HEK293T (cell line): ENCODE measurements at regions of chr13 and their contacts with region 1.

Region 1: DNA sequence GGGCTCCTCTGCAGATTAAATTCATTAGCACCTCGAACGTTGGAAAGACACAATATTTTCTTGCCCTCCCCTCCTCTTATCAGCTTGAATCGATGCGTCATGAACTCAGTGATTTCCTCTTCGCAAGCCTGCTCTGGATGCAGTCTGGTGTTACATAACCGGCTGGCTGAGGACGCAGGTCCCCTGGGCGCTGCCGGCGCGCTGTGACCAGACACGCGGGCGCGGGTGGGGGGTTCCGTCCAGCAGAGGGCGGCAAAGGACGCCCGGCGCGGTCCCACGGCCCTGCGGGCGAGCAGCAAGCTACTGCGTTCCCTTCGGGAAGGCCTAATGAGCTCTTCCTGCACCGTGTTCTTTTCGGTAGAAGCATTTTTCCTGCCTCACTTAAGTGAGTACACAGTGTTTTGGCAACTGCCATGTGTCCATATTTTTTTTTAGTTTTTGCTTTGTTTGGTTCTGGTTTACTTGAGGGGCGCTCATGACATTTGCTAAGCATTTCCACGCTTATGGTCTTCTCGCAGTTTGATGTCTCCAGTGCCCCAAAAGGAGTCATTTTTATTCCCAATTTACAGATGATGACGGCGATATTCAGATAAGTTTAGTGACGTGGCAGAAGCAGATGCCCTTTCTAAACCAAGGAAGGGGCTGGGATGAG is 112.2 kb upstream of the MBNL2 start:
- DNase-seq: peak; percentile 87

Region 2: DNA sequence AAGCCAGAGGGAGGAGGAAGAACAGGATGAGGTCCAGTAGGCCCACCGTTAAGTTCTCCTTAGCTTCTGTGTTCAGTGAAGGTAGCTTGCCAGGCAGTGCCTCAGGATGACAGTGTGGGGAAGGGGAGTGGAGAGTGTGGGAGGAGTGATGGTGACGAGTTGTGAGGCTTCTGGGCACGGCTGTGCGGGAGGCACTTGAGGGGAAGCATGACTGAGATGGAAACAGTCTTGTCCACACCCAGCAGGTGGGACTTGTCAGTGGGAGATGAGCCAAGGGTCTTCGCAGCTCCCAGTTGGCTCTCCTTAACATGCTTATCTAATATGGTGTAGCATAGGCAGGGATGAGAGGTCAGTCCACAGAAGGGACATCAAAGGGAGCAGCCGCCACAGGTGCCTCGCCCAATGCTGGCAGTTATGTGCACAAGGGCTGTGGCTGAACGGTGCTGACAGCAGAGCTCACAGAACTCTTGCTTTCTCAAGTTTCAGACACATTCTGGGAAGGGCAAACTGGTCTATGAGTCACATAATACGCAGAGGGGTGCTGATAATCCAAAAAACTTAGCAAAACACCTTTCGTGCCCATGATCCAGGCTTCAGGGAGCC is 163.2 kb before region 1 on chr13:
- CTCF ChIA-PET with region 1: no interaction called
- POLR2A ChIA-PET with region 1: no interaction called
- DNase-seq: no peak

Region 3: GRCh38 chr13:97191615-97192014 is 81.6 kb after region 1 on chr13:
- CTCF ChIA-PET with region 1: interaction called, 11 read pairs
- POLR2A ChIA-PET with region 1: no interaction called
- DNase-seq: no peak

Region 4: DNA sequence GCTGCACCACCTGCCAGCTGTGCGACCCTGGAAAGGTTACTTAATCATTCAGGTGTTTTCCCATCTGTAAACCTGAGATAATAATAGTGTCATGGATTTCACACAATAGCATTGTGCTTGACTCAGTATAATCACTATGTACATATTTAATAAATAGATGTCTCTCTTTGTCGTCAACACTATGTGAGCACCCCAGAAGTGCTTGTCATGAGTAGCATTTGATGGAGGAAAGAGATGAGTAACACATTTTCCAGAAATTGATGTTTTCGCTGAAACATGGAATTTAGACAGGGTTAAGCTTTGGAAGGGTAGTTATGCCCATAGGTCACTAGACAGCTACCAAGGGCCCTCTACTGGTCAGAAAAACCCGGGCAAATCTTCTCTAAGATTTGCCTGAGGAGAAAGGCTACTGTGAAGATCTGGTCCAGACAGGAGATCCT is 102.7 kb after region 1 on chr13:
- CTCF ChIA-PET with region 1: interaction called, 16 read pairs
- POLR2A ChIA-PET with region 1: no interaction called
- DNase-seq: peak; percentile 34

Region 5: GRCh38 chr13:98429977-98430736 is 1320.2 kb after region 1 on chr13:
- CTCF ChIA-PET with region 1: no interaction called
- POLR2A ChIA-PET with region 1: no interaction called
- DNase-seq: no peak

Region 6: GRCh38 chr13:98842864-98843481 is 1733.0 kb after region 1 on chr13:
- CTCF ChIA-PET with region 1: no interaction called
- POLR2A ChIA-PET with region 1: no interaction called
- DNase-seq: peak; percentile 69